Posterior vena cava (tissue), 2 donors: ENCODE measurements at regions of chr1 and their contacts with region 1.

Region 1: GRCh38 chr1:87202922-87203655 is 125.6 kb upstream of the LMO4 start:
- DNase-seq: no peak

Region 2: GRCh38 chr1:87226341-87226760 is 23.3 kb after region 1 on chr1:
- intact Hi-C with region 1: loop called in 1 of 2 experiments (anchors 1 kb)
- DNase-seq: peak; percentile 94